CD4-positive, alpha-beta T cell (primary cell): ENCODE measurements at regions of chr14 and their contacts with region 1.

Region 1: DNA sequence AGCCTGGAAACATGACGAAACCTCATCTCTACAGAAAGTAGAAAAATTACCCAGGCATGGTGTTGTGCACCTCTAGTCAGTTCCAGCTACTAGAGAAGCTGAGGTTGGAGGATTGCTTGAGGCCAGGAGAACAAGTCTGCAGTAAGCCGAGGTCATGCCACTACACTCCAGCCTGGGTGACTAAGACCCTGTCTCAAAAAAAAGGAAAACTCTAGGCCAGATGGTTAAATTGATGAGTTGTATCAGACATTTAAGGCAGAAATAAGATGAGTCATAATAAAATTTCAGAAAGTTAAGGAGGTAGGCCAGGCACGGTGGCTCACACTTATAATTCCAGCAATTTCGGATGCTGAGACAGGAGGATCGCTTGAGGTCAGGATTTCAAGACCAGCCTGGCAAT is 10.7 kb downstream of the EIF2S1 start:
- DNase-seq: no peak
- ATAC-seq: no peak
- H3K4me3 ChIP-seq: no peak overlapping the region
- H3K4me3 Mint-ChIP-seq: no peak overlapping the region
- H3K27ac ChIP-seq: no peak overlapping the region
- H3K27ac Mint-ChIP-seq: peak overlapping the region; percentile 61
- H3K4me1 ChIP-seq: peaks cover 11% of the 10 kb centered on the region
- H3K4me1 Mint-ChIP-seq: peaks cover 51% of the 10 kb centered on the region
- H3K27me3 ChIP-seq: no peaks in the 10 kb centered on the region
- H3K27me3 Mint-ChIP-seq: no peaks in the 10 kb centered on the region
- CTCF ChIP-seq: no peak

Region 2: DNA sequence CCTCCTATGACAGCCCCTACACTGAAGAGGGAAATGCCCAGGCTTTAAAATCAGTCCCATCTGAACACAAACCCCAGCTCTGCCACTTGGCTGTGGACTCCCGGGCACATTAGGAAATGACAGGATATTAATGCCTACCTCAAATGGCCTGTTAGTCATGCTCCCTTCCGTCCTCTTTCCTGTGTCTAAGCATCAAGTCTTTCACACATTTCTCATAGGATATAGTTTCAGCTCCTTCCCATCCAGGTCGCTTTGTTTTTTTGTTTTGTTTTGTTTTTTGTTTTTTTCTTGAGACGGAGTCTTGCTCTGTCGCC is 25.0 kb after region 1 on chr14:
- CTCF ChIA-PET with region 1: no interaction called
- POLR2A ChIA-PET with region 1: no interaction called
- intact Hi-C with region 1: loop called (anchors 1 to 2 kb)
- DNase-seq: no peak
- ATAC-seq: no peak
- H3K4me3 ChIP-seq: no peak overlapping the region
- H3K4me3 Mint-ChIP-seq: no peak overlapping the region
- H3K27ac ChIP-seq: no peak overlapping the region
- H3K27ac Mint-ChIP-seq: no peak overlapping the region
- H3K4me1 ChIP-seq: peaks cover 10% of the 10 kb centered on the region
- H3K4me1 Mint-ChIP-seq: peaks cover 12% of the 10 kb centered on the region
- H3K27me3 ChIP-seq: no peaks in the 10 kb centered on the region
- H3K27me3 Mint-ChIP-seq: no peaks in the 10 kb centered on the region
- CTCF ChIP-seq: no peak